Sigmoid colon (tissue), 7 donors: ENCODE measurements at regions of chr9 and their contacts with region 1.

Region 1: DNA sequence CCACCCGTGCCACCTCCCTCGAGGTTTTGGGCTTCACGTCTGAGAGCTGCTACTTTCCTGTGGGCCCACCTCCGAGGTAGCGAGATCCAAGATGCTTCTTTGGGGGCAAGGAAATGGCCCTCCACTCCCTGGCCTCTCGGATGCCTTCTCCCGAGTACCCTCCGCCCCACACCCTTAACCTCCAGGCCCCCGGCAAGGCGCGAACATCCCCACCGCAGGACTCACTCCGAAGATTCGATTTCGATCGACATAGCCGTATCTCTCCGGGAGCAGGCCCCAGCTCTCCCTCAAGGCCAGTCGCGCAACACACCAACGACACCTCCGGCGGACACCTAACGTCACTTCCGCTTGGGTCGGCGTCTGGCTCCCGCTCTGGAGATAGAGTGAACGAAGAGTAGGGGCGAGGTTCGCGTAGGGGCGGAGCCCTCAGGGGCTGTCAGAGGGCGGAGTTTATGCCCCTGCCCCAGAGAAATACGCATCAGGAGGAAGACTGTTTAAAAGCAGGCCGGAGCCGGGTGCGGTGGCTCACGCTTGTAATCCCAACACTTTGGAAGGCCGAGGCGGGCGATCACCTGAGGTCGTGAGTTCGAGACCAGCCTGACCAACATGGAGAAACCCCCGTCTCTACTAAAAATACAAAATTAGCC is at the start of gene SMU1:
- DNase-seq: peak; percentile 99
- H3K4me3 ChIP-seq: peak within 1 kb of the TSS; percentile 62 to 80 (median 72)
- H3K27ac ChIP-seq: peak within 1 kb of the TSS; percentile 89 to 95 (median 90)
- H3K4me1 ChIP-seq: peaks cover 0 to 25% (median 8%) of the 10 kb centered on the region in 4 donors
- H3K27me3 ChIP-seq: no peaks in the 10 kb centered on the region
- CTCF ChIP-seq: no peak
- EP300 ChIP-seq: peak in 1 of 4 donors; percentile 77
- POLR2A ChIP-seq: peak; percentile 75 to 80
- total RNA-seq, gene SMU1: 15.0 to 22.3 (median 20.1) TPM

Region 2: DNA sequence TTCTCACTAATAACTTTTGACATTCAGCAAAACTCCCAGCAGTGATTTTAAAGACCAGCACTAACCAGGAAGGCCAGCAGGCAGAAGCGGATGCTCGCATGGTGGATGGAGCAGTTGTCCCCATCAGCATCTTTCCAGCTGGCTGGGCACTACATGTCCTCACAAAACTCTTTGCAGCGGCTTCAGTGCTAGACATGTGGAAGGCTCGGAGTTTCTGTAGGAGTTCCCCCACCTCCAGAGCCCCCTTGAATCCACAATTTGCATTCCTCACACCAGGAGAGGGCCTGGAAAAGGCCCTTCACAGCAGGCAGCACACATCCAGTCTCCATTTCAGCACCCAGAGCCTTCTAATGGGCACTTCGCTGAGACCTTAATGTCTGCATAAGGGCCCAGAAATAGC is 160.7 kb before region 1 on chr9:
- intact Hi-C with region 1: no loop called
- DNase-seq: no peak
- H3K4me3 ChIP-seq: no peak overlapping the region
- H3K27ac ChIP-seq: no peak overlapping the region
- H3K4me1 ChIP-seq: no peaks in the 10 kb centered on the region
- H3K27me3 ChIP-seq: no peaks in the 10 kb centered on the region
- CTCF ChIP-seq: no peak
- EP300 ChIP-seq: no peak
- POLR2A ChIP-seq: no peak

Region 3: GRCh38 chr9:33024966-33025571 is 51.4 kb before region 1 on chr9 and contains the start of gene DNAJA1:
- intact Hi-C with region 1: loop called (anchors 5 kb)
- DNase-seq: peak; percentile 97
- H3K4me3 ChIP-seq: peak within 1 kb of the TSS; percentile 97 to 100 (median 99)
- H3K27ac ChIP-seq: peak within 1 kb of the TSS; percentile 98 to 100 (median 99)
- H3K4me1 ChIP-seq: peaks cover 0 to 54% (median 51%) of the 10 kb centered on the region in 4 donors
- H3K27me3 ChIP-seq: no peaks in the 10 kb centered on the region
- CTCF ChIP-seq: no peak
- EP300 ChIP-seq: peak in 1 of 4 donors; percentile 89
- POLR2A ChIP-seq: peak; percentile 88 to 95
- total RNA-seq, gene DNAJA1: 49.0 to 102 (median 76.6) TPM

Region 4: DNA sequence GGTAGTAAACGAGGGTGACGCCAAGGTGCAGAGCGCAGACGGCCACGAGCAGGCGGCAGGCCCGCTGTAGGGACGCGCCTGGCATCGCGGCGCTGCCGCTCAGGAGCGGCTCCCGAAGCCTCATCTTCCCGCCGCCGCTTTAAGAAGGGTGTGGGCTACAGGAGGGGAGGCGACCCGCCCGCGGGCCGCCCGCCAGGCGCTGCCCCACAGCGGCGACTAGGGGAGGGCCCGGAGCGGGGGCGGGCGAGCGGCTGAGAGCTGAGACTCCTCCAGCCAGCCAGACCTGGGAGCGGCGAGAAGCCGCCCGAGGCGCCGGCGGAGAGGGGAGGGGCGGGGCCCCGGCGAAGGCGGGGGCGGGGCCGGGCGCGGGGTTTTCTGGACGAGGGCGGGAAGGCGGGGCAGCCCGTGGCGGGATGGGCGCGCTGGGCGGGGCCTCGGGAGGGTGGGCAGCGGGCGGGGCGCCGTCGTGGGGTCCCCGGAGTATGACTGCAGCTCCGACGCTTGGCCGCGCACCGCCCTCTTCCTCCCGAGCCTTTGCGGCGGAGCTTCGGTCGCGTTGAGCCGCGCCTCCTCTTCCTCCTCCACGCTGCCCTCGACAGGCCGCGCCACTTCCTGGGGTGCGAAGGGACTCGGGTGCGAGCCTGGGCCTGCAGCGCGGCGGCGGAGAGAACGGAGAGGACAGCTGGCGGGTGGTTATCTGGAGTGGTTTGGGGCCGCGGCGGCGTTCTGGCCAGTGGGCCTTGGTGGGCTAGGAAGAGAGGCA is 90.7 kb after region 1 on chr9 and contains the start of gene B4GALT1:
- intact Hi-C with region 1: loop called (anchors 5 kb)
- DNase-seq: peak; percentile 97
- H3K4me3 ChIP-seq: peak within 1 kb of the TSS; percentile 66 to 98 (median 88)
- H3K27ac ChIP-seq: peak within 1 kb of the TSS; percentile 83 to 98 (median 92)
- H3K4me1 ChIP-seq: peaks cover 0 to 49% (median 45%) of the 10 kb centered on the region in 4 donors
- H3K27me3 ChIP-seq: no peaks in the 10 kb centered on the region
- CTCF ChIP-seq: no peak
- EP300 ChIP-seq: no peak
- POLR2A ChIP-seq: peak; percentile 65 to 74
- total RNA-seq, gene B4GALT1: 20.3 to 28.0 (median 25.0) TPM

Region 5: DNA sequence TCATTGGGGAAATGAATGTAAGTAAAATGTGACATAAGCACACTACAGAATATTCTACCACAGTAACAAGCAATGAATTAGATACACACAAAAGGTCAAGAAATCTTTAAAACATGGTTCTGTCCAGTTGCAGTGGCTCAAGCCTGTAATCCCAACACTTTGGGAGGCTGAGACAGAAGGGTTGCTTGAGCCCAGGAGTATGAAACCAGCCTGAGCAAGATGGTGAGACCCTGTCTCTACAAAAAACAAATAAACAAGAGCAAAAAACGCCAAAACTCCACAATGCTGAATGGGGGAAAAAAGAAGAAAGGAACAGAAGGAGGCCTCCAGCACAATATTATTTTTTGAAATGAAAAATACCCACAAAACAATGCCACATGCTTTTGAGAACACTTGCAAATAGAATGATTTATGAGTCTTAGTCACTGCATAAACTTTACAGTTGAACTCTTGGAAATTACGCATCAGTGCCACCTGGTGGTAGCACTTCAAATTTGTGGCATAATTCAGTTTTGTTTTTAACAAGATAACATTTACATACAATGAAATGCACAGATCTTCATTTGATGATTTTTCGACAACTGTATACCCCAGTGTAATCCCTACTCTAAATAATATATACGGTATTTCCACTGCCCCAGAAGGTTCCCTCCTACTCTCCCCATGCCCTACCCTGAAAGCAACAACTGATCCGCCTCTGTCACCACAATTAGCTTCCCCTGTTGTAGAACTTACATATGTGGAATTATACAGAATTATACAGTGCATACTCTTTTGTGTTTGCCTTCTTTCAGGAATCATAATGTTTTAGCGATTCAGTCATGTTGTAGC is 149.1 kb after region 1 on chr9:
- intact Hi-C with region 1: loop called (anchors 1 kb)
- DNase-seq: no peak
- H3K4me3 ChIP-seq: no peak overlapping the region
- H3K27ac ChIP-seq: no peak overlapping the region
- H3K4me1 ChIP-seq: peaks cover 0 to 8% (median 5%) of the 10 kb centered on the region in 4 donors
- H3K27me3 ChIP-seq: no peaks in the 10 kb centered on the region
- CTCF ChIP-seq: peak; percentile 68 to 89 (median 77)
- EP300 ChIP-seq: no peak
- POLR2A ChIP-seq: no peak

Region 6: GRCh38 chr9:33466565-33467495 is 390.3 kb after region 1 on chr9:
- intact Hi-C with region 1: no loop called
- DNase-seq: peak; percentile 76
- H3K4me3 ChIP-seq: no peak overlapping the region
- H3K27ac ChIP-seq: no peak overlapping the region
- H3K4me1 ChIP-seq: peaks cover 0 to 3% (median 1%) of the 10 kb centered on the region in 4 donors
- H3K27me3 ChIP-seq: no peaks in the 10 kb centered on the region
- CTCF ChIP-seq: peak; percentile 83 to 94 (median 88)
- EP300 ChIP-seq: no peak
- POLR2A ChIP-seq: no peak

Region 7: DNA sequence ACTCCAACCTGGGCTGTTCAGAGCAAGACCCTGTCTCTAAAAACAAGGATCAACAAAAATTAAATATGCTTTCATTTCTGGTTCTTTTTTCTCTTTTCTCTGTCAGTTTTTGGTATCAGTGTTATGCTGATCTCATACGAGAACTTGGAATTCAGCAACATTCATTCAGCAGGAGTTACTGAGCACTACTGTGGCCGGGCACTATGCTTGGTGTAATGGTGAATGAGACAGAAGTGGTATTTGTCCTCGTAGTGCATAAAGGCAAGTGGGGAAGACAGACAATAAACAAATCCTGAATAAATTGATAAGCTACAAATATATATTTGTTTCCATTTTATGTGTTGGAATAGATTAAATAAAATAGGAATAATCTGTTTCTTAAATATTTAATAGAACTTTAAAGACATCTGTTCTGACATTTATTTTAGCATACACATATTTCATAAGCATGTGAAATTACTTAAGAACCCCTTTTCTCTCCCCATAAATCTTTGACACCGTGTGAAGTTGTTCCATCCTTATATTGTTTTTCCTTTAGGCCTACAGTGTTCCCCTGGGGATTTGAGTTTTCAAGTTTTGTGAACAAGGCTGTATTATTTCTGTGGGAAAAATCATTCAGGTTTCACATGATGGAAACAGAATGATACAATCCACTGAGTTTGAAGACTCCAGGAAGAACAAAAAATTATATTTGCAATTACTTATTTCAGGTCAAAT is 1127.0 kb after region 1 on chr9:
- intact Hi-C with region 1: no loop called
- DNase-seq: no peak
- H3K4me3 ChIP-seq: no peak overlapping the region
- H3K27ac ChIP-seq: peak overlapping the region in 1 of 4 donors; percentile 12
- H3K4me1 ChIP-seq: peaks cover 0 to 31% (median 9%) of the 10 kb centered on the region in 4 donors
- H3K27me3 ChIP-seq: no peaks in the 10 kb centered on the region
- CTCF ChIP-seq: no peak
- EP300 ChIP-seq: no peak
- POLR2A ChIP-seq: no peak